Testis (tissue), 5 donors: ENCODE measurements at regions of chr12 and their contacts with region 1.

Region 1: DNA sequence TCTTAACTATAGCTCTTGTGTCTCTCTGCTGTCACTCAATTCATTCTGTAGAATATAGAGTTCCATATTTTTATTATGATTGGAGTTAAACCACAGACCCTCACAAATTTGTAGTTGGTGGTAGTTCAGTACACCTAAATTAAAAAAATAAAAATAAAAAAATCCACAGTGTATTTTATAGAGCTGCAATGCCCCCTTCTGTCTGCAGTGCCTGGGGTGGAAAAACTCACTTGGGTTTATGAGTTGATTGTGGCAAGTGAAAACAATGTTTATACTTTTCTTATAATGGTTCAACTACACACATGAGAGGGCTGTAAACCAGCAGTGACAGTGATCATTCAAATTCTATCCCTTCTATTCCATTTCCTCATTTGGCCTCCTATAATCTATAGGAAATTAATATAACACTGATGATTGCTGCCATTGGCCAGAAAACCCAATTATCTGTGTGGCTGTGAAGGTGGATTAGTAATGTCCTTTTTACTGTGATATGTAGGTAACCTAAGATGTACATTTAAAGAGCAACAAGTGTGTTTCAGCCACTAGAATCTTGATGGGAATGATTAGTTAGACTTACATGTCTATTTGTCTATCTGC is 166.9 kb upstream of the LRIG3 start:
- DNase-seq: no peak
- H3K4me3 ChIP-seq: no peak overlapping the region
- H3K27ac ChIP-seq: no peak overlapping the region
- H3K4me1 ChIP-seq: no peaks in the 10 kb centered on the region
- H3K27me3 ChIP-seq: no peaks in the 10 kb centered on the region
- CTCF ChIP-seq: peak in 2 of 3 experiments; percentile 23 to 24
- POLR2A ChIP-seq: no peak

Region 2: DNA sequence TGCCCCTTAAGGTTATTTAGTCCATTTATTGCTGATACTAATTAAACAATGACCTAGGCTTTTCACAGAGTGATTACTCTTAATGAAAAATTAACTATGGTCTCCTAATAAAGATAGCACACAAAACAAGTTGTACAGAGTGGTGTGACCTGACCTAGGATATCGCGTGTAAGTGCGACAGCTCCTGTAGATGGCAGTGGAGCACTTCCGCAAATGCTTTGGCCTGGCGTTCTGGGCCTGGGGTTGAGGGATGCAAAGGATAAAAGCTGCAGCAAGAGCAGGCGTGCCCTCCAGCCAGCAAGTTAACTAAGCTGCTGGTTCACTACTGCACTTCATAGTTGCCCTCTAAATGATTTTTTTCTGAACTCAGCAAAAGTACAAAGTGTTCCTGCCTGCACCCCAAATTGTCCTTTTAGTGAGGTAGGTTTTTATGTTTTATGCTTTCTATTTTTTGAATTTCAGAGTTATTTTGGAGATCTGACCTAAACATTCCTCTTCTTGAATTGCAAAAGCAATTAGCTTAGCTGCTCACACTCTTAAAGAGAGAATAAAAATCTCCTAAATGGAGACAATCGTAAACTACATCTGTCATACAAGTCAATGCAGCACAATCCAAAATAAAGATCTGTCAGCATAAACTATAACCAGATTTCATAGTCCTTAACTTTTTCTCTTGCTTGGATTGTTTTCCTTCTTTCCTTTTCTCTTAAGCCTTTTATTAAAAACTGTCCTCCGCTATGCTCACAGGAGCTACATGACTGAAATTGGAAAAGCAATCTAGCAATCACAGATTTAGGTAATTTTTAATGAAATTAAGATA is 546.5 kb before region 1 on chr12:
- intact Hi-C with region 1: loop called (anchors 10 kb)
- DNase-seq: peak; percentile 83
- H3K4me3 ChIP-seq: no peak overlapping the region
- H3K27ac ChIP-seq: peak overlapping the region in 1 of 2 donors; percentile 33
- H3K4me1 ChIP-seq: no peaks in the 10 kb centered on the region
- H3K27me3 ChIP-seq: no peaks in the 10 kb centered on the region
- CTCF ChIP-seq: peak; percentile 20 to 58 (median 50)
- POLR2A ChIP-seq: no peak

Region 3: DNA sequence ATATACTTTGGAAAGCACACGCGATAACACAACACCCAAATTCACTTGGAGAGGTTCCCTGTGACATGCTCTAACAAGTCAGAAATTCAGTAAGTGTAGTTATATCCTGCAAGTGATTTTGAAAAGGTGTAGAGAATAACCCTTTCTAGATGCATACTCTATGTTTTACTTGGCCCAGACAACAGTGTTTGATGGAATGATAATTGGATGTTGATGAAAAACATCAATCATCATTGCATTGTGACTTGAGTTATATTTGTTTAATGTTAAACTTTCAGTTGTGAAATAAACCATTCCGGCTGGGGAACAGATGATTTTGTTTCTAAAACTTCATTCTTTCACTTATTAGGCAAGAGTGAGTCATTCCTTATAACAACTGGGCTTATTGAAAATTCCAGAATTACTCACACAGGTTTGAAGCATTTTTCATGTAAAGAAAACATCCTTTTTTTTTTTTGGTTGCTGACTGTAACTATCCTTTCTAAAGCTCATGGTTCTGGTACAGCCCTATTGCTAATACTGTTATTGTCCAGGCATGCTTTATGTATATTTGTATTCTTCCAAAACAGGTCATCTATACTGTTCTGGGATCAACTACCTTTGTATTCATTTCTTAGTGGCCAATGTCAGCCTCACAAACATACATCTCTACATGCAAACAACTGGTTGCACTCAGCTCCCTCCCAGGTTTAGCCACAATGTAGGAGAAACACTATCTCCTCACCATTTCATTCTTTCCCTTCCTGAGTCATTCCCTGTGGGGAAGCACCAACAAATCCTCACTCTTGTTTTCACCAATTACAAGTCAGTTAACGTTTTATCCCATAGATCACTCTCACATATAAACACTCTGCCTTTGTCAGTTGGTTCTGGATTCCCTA is 45.7 kb before region 1 on chr12:
- intact Hi-C with region 1: no loop called
- DNase-seq: no peak
- H3K4me3 ChIP-seq: no peak overlapping the region
- H3K27ac ChIP-seq: no peak overlapping the region
- H3K4me1 ChIP-seq: no peaks in the 10 kb centered on the region
- H3K27me3 ChIP-seq: no peaks in the 10 kb centered on the region
- CTCF ChIP-seq: no peak
- POLR2A ChIP-seq: no peak